H1 (cell line): ENCODE measurements at regions of chr11 and their contacts with region 1.

Region 1: GRCh38 chr11:64409707-64410403 is 50.9 kb downstream of the RPS6KA4 start:
- DNase-seq: no peak
- H3K4me3 ChIP-seq: no peak overlapping the region
- H3K27ac ChIP-seq: no peak overlapping the region
- H3K4me1 ChIP-seq: peaks cover 0 to 7% (median 3%) of the 10 kb centered on the region in 4 experiments; a peak in 6 of 7 replicates
- H3K27me3 ChIP-seq: peaks cover 0 to 5% (median 2%) of the 10 kb centered on the region in 4 experiments; a peak in 4 of 7 replicates
- CTCF ChIP-seq: no peak
- EP300 ChIP-seq: no peak
- POLR2A ChIP-seq: no peak
- RAD21 ChIP-seq: no peak

Region 2: DNA sequence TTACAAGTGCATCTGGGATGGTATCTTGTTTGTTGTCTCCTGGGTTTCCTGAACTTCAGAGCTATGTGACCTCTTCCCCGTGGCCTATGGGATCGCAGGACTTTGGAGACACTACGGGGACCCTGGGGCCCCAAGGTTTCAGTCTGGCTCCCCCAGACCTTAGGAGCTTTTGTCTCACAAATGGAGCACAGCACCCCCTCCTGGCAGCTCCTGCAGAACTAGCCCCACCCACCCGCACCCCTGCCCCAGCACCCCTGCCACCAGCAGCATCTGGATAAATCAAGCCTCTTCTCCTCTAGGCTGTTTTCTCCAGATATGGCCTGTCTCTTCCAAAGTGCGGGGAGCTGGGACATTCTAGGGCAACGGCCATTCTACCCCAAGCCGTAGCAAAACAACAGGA is 503.3 kb before region 1 on chr11:
- CTCF ChIA-PET with region 1: no interaction called
- POLR2A ChIA-PET with region 1: no interaction called
- DNase-seq: peak in 1 of 2 experiments; percentile 69
- H3K4me3 ChIP-seq: no peak overlapping the region
- H3K27ac ChIP-seq: no peak overlapping the region
- H3K4me1 ChIP-seq: peaks cover 6 to 51% (median 41%) of the 10 kb centered on the region in 4 experiments
- H3K27me3 ChIP-seq: no peaks in the 10 kb centered on the region
- CTCF ChIP-seq: peak in 2 of 3 experiments; percentile 18 to 22; a peak in 2 of 4 replicates
- EP300 ChIP-seq: no peak
- POLR2A ChIP-seq: no peak
- RAD21 ChIP-seq: peak; percentile 28 to 39; a peak in 3 of 4 replicates

Region 3: GRCh38 chr11:64386306-64386702 is 23.6 kb before region 1 on chr11:
- CTCF ChIA-PET with region 1: interaction called, 11 read pairs
- POLR2A ChIA-PET with region 1: interaction called, 3 read pairs
- DNase-seq: no peak
- H3K4me3 ChIP-seq: no peak overlapping the region
- H3K27ac ChIP-seq: no peak overlapping the region
- H3K4me1 ChIP-seq: peaks cover 0 to 2% (median 0%) of the 10 kb centered on the region in 4 experiments; a peak in 4 of 7 replicates
- H3K27me3 ChIP-seq: peaks cover 0 to 2% (median 0%) of the 10 kb centered on the region in 4 experiments; a peak in 1 of 7 replicates
- CTCF ChIP-seq: no peak
- EP300 ChIP-seq: no peak
- POLR2A ChIP-seq: no peak
- RAD21 ChIP-seq: no peak

Region 4: GRCh38 chr11:64396079-64396591 is 13.7 kb before region 1 on chr11:
- CTCF ChIA-PET with region 1: interaction called, 6 read pairs
- POLR2A ChIA-PET with region 1: interaction called, 10 read pairs
- DNase-seq: peak in 1 of 2 experiments; percentile 62
- H3K4me3 ChIP-seq: peak overlapping the region in 1 of 4 experiments; percentile 14; a peak in 1 of 8 replicates
- H3K27ac ChIP-seq: no peak overlapping the region
- H3K4me1 ChIP-seq: peaks cover 0 to 17% (median 10%) of the 10 kb centered on the region in 4 experiments; a peak in 6 of 7 replicates
- H3K27me3 ChIP-seq: peaks cover 0 to 2% (median 0%) of the 10 kb centered on the region in 4 experiments; a peak in 3 of 7 replicates
- CTCF ChIP-seq: no peak
- EP300 ChIP-seq: no peak
- POLR2A ChIP-seq: no peak
- RAD21 ChIP-seq: 0 out of 4 replicates have a peak, but pooled peaks have one; percentile 9 to 12